OCI-LY7 (cell line): ENCODE measurements at regions of chr7 and their contacts with region 1.

Region 1: GRCh38 chr7:831596-832166 is 595 bp upstream of the SUN1 start:
- DNase-seq: no peak
- H3K4me3 ChIP-seq: no peak overlapping the region
- H3K27ac ChIP-seq: no peak overlapping the region
- H3K4me1 ChIP-seq: no peaks in the 10 kb centered on the region
- CTCF ChIP-seq: no peak

Region 2: GRCh38 chr7:519484-520390 is 311.9 kb before region 1 on chr7 and contains the start of gene PDGFA:
- CTCF ChIA-PET with region 1: no interaction called
- POLR2A ChIA-PET with region 1: no interaction called
- intact Hi-C with region 1: no loop called
- DNase-seq: no peak
- H3K4me3 ChIP-seq: no peak within 1 kb of the TSS
- H3K27ac ChIP-seq: no peak within 1 kb of the TSS
- H3K4me1 ChIP-seq: no peaks in the 10 kb centered on the region
- CTCF ChIP-seq: no peak
- total RNA-seq, gene PDGFA: not detected in 2 replicates

Region 3: DNA sequence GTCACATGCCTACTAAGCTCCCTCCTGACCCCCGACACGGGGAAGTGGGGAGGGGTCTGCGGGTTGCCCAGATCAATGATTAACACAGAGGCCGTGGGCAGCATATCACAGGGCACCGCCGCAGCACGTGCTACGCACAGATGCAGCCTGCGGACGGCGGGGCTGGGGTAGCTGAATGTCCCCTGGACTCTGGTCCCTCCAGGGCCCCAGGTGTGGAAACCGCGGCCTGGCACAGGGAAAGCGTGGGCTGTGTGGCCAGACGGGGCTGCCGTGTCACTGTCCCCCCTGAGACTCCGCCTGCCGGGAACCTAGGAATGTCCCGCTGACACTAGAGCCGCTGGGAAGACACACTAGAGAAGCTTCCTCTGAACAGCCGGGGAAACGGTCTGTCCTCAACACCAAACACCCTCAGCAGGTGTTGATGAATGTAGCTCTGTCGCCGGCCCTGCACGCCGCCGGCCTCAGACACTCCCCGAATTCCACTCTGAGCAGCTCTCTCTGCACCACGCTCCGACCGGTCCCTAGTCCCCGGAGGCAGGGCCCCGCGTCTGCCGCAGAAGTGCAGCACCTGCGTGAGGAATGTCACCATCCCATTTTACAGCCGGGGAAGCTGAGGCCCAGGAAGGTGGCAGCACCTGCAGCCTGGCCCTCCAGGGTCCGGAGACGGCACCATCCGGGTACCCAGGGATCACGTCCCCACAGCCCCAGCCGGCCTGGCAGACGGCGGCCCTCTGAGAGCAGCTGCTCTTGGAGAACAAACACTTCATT is 278.6 kb before region 1 on chr7:
- CTCF ChIA-PET with region 1: no interaction called
- POLR2A ChIA-PET with region 1: interaction called, 10 read pairs
- intact Hi-C with region 1: no loop called
- DNase-seq: no peak
- H3K4me3 ChIP-seq: no peak overlapping the region
- H3K27ac ChIP-seq: no peak overlapping the region
- H3K4me1 ChIP-seq: no peaks in the 10 kb centered on the region
- CTCF ChIP-seq: no peak

Region 4: GRCh38 chr7:954330-955238 is 122.9 kb after region 1 on chr7 and contains the start of gene ADAP1:
- CTCF ChIA-PET with region 1: no interaction called
- POLR2A ChIA-PET with region 1: no interaction called
- intact Hi-C with region 1: no loop called
- DNase-seq: peak; percentile 52
- H3K4me3 ChIP-seq: no peak within 1 kb of the TSS
- H3K27ac ChIP-seq: no peak within 1 kb of the TSS
- H3K4me1 ChIP-seq: peaks cover 22% of the 10 kb centered on the region
- CTCF ChIP-seq: no peak
- total RNA-seq, gene ADAP1: 0.41 and 2.4 TPM in 2 replicates